CD4-positive, alpha-beta T cell (primary cell): ENCODE measurements at regions of chr4 and their contacts with region 1.

Region 1: GRCh38 chr4:182925298-182925738 is 8.1 kb upstream of the DCTD start:
- DNase-seq: peak; percentile 16 to 82 (median 50)
- ATAC-seq: peak; percentile 92
- H3K4me3 ChIP-seq: no peak overlapping the region
- H3K4me3 Mint-ChIP-seq: no peak overlapping the region
- H3K27ac ChIP-seq: no peak overlapping the region
- H3K27ac Mint-ChIP-seq: no peak overlapping the region
- H3K4me1 ChIP-seq: no peaks in the 10 kb centered on the region
- H3K4me1 Mint-ChIP-seq: peaks cover 5% of the 10 kb centered on the region
- H3K27me3 ChIP-seq: no peaks in the 10 kb centered on the region
- H3K27me3 Mint-ChIP-seq: peaks cover 33% of the 10 kb centered on the region
- CTCF ChIP-seq: peak; percentile 68

Region 2: GRCh38 chr4:181143250-181143854 is 1782.0 kb before region 1 on chr4:
- CTCF ChIA-PET with region 1: no interaction called
- POLR2A ChIA-PET with region 1: no interaction called
- intact Hi-C with region 1: loop called in 1 of 2 experiments (anchors 2 kb)
- DNase-seq: peak; percentile 37 to 75 (median 50)
- ATAC-seq: peak; percentile 41
- H3K4me3 ChIP-seq: no peak overlapping the region
- H3K4me3 Mint-ChIP-seq: no peak overlapping the region
- H3K27ac ChIP-seq: no peak overlapping the region
- H3K27ac Mint-ChIP-seq: no peak overlapping the region
- H3K4me1 ChIP-seq: no peaks in the 10 kb centered on the region
- H3K4me1 Mint-ChIP-seq: no peaks in the 10 kb centered on the region
- H3K27me3 ChIP-seq: no peaks in the 10 kb centered on the region
- H3K27me3 Mint-ChIP-seq: peaks cover 15% of the 10 kb centered on the region
- CTCF ChIP-seq: peak; percentile 86

Region 3: DNA sequence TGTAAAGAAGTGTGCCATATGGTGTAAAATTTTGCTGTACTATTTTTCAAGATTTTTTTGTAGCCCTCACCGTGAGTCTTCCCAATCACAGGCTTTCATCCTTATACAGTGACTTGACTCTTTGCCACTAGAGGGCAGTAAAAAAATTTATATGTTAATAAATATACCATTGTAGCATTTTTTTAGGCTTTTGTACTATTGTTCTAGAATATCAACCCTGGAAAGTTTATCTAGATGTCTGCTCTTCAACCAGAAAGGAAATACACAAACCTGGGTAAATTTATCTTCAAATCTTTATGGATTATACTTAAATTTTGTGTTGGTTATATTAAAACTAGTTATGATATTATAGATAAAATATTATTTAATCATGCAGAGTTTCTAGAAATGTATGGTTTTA is 446.8 kb before region 1 on chr4:
- CTCF ChIA-PET with region 1: no interaction called
- POLR2A ChIA-PET with region 1: no interaction called
- intact Hi-C with region 1: loop called (anchors 1 kb)
- DNase-seq: peak in 3 of 14 experiments; percentile 20 to 42 (median 21)
- ATAC-seq: no peak
- H3K4me3 ChIP-seq: no peak overlapping the region
- H3K4me3 Mint-ChIP-seq: no peak overlapping the region
- H3K27ac ChIP-seq: no peak overlapping the region
- H3K27ac Mint-ChIP-seq: no peak overlapping the region
- H3K4me1 ChIP-seq: no peaks in the 10 kb centered on the region
- H3K4me1 Mint-ChIP-seq: no peaks in the 10 kb centered on the region
- H3K27me3 ChIP-seq: peaks cover 0 to 5% of the 10 kb centered on the region in 2 experiments
- H3K27me3 Mint-ChIP-seq: peaks cover 22% of the 10 kb centered on the region
- CTCF ChIP-seq: peak; percentile 81

Region 4: DNA sequence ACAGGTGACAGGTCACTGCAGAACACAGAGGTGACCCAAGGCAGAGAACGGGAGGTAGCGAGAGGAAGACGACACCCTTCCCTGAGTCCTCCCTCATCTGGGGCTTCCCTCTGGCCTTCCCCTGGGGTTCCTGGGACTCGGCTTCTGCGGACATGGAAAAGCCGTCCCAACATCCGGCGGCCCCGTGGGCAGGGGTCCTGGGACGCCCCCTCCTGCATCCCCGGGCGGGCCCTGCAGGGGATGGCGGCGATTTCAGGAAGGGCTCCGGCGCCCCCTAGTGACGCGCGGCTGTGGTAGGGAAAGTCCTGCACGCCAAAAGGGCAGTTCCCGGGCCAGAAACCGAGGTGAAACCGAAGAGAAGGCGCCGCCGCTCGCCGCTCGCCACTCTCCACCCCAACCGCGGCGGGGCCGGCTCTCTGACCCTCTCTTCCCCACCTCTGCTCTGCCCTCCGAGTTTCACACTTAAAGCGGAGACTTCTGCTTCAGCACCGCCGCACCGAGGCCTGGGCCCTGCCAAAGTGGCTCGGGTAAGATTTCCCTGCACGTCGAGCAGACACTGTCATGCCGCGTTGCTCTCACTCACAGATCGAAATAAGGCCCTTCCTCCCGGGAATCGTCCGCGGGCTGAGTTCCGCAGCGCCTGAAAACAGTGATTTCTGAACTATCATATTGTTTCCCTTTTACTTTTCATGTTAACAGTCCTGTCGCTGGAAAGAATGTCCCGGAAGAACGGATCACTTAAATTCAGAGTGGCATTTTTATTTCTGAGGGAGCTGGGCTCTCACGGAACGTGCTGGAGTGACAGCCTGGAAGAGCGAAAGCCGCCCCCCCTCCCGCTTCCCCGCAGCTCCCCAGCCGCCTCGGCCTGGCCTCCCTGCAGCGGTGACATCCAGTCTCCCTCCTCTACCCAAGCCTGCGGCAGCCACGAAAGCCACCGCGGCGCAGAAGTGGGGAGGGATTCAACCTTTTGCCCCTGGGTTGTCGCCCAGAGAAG is 118.8 kb before region 1 on chr4:
- CTCF ChIA-PET with region 1: no interaction called
- POLR2A ChIA-PET with region 1: no interaction called
- intact Hi-C with region 1: loop called in 1 of 2 experiments (anchors 5 kb)
- DNase-seq: peak; percentile 26 to 75 (median 50)
- ATAC-seq: peak; percentile 26
- H3K4me3 ChIP-seq: peak overlapping the region; percentile 39
- H3K4me3 Mint-ChIP-seq: peak overlapping the region; percentile 85
- H3K27ac ChIP-seq: no peak overlapping the region
- H3K27ac Mint-ChIP-seq: no peak overlapping the region
- H3K4me1 ChIP-seq: peaks cover 30% of the 10 kb centered on the region
- H3K4me1 Mint-ChIP-seq: peaks cover 6% of the 10 kb centered on the region
- H3K27me3 ChIP-seq: no peaks in the 10 kb centered on the region
- H3K27me3 Mint-ChIP-seq: no peaks in the 10 kb centered on the region
- CTCF ChIP-seq: peak; percentile 88